Activated CD8-positive, alpha-beta T cell treated with anti-CD3 and anti-CD28 coated beads, Interleukin-2, amount 10 ng/mL, durations not matched to agents 7 days and 5 days (primary cell): ENCODE measurements at regions of chr13 and their contacts with region 1.

Region 1: DNA sequence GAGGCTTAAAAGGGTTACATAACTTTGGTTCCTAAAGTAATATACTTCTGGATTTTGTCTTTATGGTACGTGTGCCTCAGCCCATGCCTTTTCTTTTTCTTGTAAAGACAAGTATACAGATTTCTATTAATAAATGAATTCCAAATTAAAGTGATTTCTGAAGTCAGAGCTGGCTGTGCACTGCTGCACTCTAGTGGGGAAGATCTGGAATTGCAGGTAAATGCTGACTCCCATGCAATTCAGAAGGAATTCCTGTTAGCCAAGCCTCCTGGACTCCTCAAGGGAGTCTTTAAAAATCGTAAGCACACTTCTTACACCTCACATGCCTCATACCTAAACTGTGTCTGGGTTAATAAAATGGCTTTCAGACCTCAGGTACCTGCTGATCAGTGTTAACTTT is 118.4 kb upstream of the SLC7A1 start:
- DNase-seq: no peak
- ATAC-seq: no peak
- H3K4me3 Mint-ChIP-seq: no peak overlapping the region
- H3K27ac Mint-ChIP-seq: no peak overlapping the region
- H3K4me1 Mint-ChIP-seq: no peaks in the 10 kb centered on the region
- H3K27me3 Mint-ChIP-seq: peaks cover 11% of the 10 kb centered on the region

Region 2: DNA sequence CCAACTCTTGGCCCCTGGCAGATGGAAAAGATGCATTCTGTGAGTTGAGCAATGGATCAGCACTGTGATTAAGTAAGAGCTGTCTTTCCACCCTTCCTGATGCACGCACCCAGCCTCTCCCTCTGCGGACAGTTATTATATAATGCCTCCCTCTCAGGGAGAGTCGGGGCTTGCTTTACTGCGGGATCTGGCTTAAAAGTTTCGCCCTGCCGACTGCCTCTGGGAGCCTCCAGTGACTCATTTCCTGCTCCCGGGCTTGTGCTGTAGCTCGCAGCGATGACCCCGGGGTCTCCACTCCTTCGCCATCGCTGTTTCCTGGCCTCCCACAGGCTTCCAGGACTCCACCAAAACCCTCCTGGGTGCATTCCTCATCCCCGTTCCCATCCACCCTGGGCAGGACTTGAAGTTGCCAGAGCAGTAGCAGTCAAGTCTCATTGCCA is 10.9 kb before region 1 on chr13:
- CTCF ChIA-PET with region 1: interaction called, 12 read pairs
- POLR2A ChIA-PET with region 1: no interaction called
- DNase-seq: no peak
- ATAC-seq: no peak
- H3K4me3 Mint-ChIP-seq: no peak overlapping the region
- H3K27ac Mint-ChIP-seq: no peak overlapping the region
- H3K4me1 Mint-ChIP-seq: no peaks in the 10 kb centered on the region
- H3K27me3 Mint-ChIP-seq: peaks cover 30% of the 10 kb centered on the region